ENCODE measurements at regions of chr6 and their contacts with region 1.

Region 1: DNA sequence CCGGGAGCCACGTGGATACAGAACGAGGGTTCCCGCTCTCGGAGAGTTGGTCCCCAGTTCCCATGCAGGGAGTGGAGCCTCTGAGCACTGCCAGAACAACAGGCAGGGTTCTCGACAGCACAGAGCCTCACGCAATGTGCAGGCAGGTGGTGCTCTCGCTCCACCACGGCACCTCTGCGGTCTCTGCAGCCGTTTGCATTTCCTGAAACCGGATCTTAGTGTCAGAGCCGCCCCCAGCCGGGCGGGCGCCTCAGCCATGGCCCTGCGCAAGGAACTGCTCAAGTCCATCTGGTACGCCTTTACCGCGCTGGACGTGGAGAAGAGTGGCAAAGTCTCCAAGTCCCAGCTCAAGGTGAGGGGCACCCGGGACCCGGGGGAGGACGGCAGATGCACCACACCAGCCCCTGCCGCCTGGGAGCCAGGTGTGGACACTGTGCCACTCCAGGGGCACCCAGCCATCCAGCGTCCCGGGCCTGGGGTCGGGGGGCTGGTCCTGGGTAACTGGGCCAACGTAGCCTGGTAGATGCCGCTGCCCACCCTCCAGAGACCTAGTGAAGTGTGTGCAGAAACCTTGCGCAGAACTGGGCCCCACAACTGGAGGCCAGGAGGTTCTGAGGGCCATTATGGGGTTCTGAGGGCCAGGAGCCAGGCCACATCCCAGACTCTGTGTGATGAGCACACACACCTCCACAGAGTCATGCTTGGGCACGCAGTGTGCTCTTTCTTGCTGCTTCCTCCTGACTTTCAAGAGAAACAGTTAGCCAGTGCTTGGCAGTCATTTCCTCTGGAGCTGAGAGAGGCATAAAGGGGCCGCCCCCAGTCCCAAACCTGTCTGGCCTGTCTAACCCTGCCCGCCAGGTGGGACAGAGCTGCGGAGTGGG is at the start of gene DEF6:
- DNase-seq: peak; percentile 82 to 94 (median 88)
- ATAC-seq: peak; percentile 71
- H3K4me3 ChIP-seq: peak within 1 kb of the TSS; percentile 91 to 99
- H3K4me3 Mint-ChIP-seq: peak within 1 kb of the TSS; percentile 86
- H3K27ac ChIP-seq: peak within 1 kb of the TSS; percentile 81 to 89
- H3K27ac Mint-ChIP-seq: peak within 1 kb of the TSS; percentile 98
- H3K4me1 ChIP-seq: peaks cover 48% of the 10 kb centered on the region
- H3K4me1 Mint-ChIP-seq: peaks cover 51% of the 10 kb centered on the region
- H3K27me3 ChIP-seq: no peaks in the 10 kb centered on the region
- H3K27me3 Mint-ChIP-seq: no peaks in the 10 kb centered on the region
- CTCF ChIP-seq: peak; percentile 90
- total RNA-seq, gene DEF6: 172 to 182 TPM

Region 2: DNA sequence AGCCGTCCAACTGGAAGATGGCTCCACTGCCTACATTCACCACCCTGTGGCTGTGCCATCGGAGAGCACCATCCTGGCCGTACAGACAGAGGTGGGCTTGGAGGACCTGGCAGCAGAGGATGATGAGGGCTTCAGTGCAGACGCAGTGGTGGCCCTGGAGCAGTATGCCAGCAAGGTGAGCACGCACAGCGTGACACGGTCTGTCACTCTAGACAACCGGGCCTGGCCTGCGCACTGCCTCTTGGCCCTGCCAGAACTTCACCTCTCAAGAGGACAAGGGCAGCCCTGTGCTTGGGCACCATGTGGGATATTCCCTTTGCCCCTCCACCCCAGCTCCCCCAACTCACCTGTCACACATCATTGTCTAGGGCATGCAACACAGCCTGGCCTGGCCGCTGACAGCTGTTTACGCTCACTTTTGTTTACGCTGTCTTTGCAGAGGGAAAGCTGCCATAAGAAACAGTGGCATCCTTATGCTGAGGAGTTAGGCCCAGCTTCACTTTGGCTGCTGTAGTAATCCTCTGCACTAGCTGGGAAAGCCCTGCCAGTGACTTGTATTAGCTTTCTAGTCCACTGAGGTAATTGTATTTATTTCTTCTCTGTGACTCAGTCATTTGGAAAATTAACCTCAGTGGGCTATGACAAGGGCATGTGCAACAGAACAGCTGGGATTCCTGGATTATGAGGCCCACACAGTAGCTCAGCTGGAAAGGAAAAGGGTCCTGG is 10.0 kb before region 1 on chr6:
- CTCF ChIA-PET with region 1: interaction called, 26 read pairs
- POLR2A ChIA-PET with region 1: interaction called, 3 read pairs
- intact Hi-C with region 1: no loop called
- DNase-seq: no peak
- ATAC-seq: no peak
- H3K4me3 ChIP-seq: no peak overlapping the region
- H3K4me3 Mint-ChIP-seq: no peak overlapping the region
- H3K27ac ChIP-seq: no peak overlapping the region
- H3K27ac Mint-ChIP-seq: no peak overlapping the region
- H3K4me1 ChIP-seq: no peaks in the 10 kb centered on the region
- H3K4me1 Mint-ChIP-seq: no peaks in the 10 kb centered on the region
- H3K27me3 ChIP-seq: no peaks in the 10 kb centered on the region
- H3K27me3 Mint-ChIP-seq: no peaks in the 10 kb centered on the region
- CTCF ChIP-seq: no peak

Region 3: DNA sequence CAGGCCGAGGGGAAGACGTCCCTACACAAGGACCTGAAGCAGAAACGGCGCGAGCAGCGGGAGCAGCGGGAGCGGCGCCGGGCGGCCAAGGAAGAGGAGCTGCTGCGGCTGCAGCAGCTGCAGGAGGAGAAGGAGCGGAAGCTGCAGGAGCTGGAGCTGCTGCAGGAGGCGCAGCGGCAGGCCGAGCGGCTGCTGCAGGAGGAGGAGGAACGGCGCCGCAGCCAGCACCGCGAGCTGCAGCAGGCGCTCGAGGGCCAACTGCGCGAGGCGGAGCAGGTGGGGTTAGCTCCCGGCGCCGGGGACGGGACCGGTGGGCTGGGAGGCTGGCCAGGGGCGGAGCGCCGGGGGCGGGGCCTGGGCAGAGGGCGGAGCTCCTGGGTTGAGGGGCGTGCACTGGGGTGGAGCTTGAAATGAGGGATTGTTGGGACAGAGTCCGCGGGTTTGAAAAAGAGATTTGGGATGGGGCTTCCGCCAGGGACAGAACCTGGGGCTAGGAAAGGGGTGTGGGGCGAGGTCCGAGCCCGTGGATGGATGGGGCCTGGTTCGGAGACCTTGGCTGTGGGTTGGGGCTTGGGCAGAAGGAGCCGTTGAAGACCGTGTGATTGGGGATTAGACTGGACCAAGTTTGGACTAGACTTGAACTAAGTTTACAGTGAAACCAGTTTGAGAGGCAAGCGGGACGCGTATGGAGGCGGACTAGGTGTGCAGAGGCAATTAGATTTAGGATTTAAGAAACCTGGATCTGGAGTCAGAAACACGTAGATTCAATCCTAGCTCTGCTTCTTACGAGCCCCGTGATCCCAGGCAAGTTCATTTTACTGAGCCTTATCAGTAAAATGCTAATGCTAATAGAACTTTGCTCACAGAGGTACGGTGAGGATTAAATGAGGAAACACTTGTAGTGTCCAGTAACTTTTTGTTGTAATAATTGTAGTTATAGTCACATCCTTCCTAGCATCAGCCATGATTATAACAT is 20.6 kb after region 1 on chr6:
- CTCF ChIA-PET with region 1: interaction called, 545 read pairs
- POLR2A ChIA-PET with region 1: interaction called, 9 read pairs
- intact Hi-C with region 1: loop called in 1 of 2 experiments (anchors 1 kb)
- DNase-seq: peak in 1 of 9 experiments; percentile 45
- ATAC-seq: no peak
- H3K4me3 ChIP-seq: no peak overlapping the region
- H3K4me3 Mint-ChIP-seq: no peak overlapping the region
- H3K27ac ChIP-seq: no peak overlapping the region
- H3K27ac Mint-ChIP-seq: peak overlapping the region; percentile 58
- H3K4me1 ChIP-seq: peaks cover 29% of the 10 kb centered on the region
- H3K4me1 Mint-ChIP-seq: peaks cover 50% of the 10 kb centered on the region
- H3K27me3 ChIP-seq: no peaks in the 10 kb centered on the region
- H3K27me3 Mint-ChIP-seq: no peaks in the 10 kb centered on the region
- CTCF ChIP-seq: no peak

Region 4: GRCh38 chr6:35342258-35343091 is 44.6 kb after region 1 on chr6 and contains the start of gene PPARD:
- CTCF ChIA-PET with region 1: interaction called, 88 read pairs
- POLR2A ChIA-PET with region 1: interaction called, 5 read pairs
- intact Hi-C with region 1: loop called (anchors 1 kb)
- DNase-seq: peak; percentile 93 to 99 (median 97)
- ATAC-seq: peak; percentile 99
- H3K4me3 ChIP-seq: peak within 1 kb of the TSS; percentile 52 to 57
- H3K4me3 Mint-ChIP-seq: peak within 1 kb of the TSS; percentile 87
- H3K27ac ChIP-seq: peak within 1 kb of the TSS; percentile 75 to 81
- H3K27ac Mint-ChIP-seq: peak within 1 kb of the TSS; percentile 94
- H3K4me1 ChIP-seq: peaks cover 43% of the 10 kb centered on the region
- H3K4me1 Mint-ChIP-seq: peaks cover 50% of the 10 kb centered on the region
- H3K27me3 ChIP-seq: no peaks in the 10 kb centered on the region
- H3K27me3 Mint-ChIP-seq: no peaks in the 10 kb centered on the region
- CTCF ChIP-seq: peak; percentile 90
- total RNA-seq, gene PPARD: 20.0 to 21.5 TPM

Region 5: GRCh38 chr6:35468181-35468979 is 170.5 kb after region 1 on chr6 and contains the start of gene RPL10A:
- CTCF ChIA-PET with region 1: interaction called, 48 read pairs
- POLR2A ChIA-PET with region 1: interaction called, 15 read pairs
- intact Hi-C with region 1: loop called (anchors 1 kb)
- DNase-seq: peak; percentile 90 to 99 (median 96)
- ATAC-seq: peak; percentile 88
- H3K4me3 ChIP-seq: peak within 1 kb of the TSS; percentile 74 to 100
- H3K4me3 Mint-ChIP-seq: peak within 1 kb of the TSS; percentile 96
- H3K27ac ChIP-seq: peak within 1 kb of the TSS; percentile 76 to 90
- H3K27ac Mint-ChIP-seq: peak within 1 kb of the TSS; percentile 99
- H3K4me1 ChIP-seq: peaks cover 26% of the 10 kb centered on the region
- H3K4me1 Mint-ChIP-seq: peaks cover 39% of the 10 kb centered on the region
- H3K27me3 ChIP-seq: no peaks in the 10 kb centered on the region
- H3K27me3 Mint-ChIP-seq: no peaks in the 10 kb centered on the region
- CTCF ChIP-seq: peak; percentile 90
- total RNA-seq, gene RPL10A: 2,275 to 2,367 TPM

Region 6: GRCh38 chr6:35624341-35625070 is 326.7 kb after region 1 on chr6:
- CTCF ChIA-PET with region 1: interaction called, 11 read pairs
- POLR2A ChIA-PET with region 1: no interaction called
- intact Hi-C with region 1: no loop called
- DNase-seq: peak in 3 of 9 experiments; percentile 58 to 79 (median 64)
- ATAC-seq: peak; percentile 86
- H3K4me3 ChIP-seq: no peak overlapping the region
- H3K4me3 Mint-ChIP-seq: peak overlapping the region; percentile 30
- H3K27ac ChIP-seq: peak overlapping the region; percentile 14 to 23
- H3K27ac Mint-ChIP-seq: peak overlapping the region; percentile 91
- H3K4me1 ChIP-seq: peaks cover 47% of the 10 kb centered on the region
- H3K4me1 Mint-ChIP-seq: peaks cover 48% of the 10 kb centered on the region
- H3K27me3 ChIP-seq: no peaks in the 10 kb centered on the region
- H3K27me3 Mint-ChIP-seq: no peaks in the 10 kb centered on the region
- CTCF ChIP-seq: peak; percentile 70

Region 7: GRCh38 chr6:35757456-35758123 is 459.7 kb after region 1 on chr6:
- CTCF ChIA-PET with region 1: no interaction called
- POLR2A ChIA-PET with region 1: no interaction called
- intact Hi-C with region 1: no loop called
- DNase-seq: peak in 1 of 9 experiments; percentile 18
- ATAC-seq: no peak
- H3K4me3 ChIP-seq: no peak overlapping the region
- H3K4me3 Mint-ChIP-seq: no peak overlapping the region
- H3K27ac ChIP-seq: no peak overlapping the region
- H3K27ac Mint-ChIP-seq: no peak overlapping the region
- H3K4me1 ChIP-seq: no peaks in the 10 kb centered on the region
- H3K4me1 Mint-ChIP-seq: peaks cover 3% of the 10 kb centered on the region
- H3K27me3 ChIP-seq: peaks cover 0 to 7% of the 10 kb centered on the region in 2 experiments
- H3K27me3 Mint-ChIP-seq: peaks cover 40% of the 10 kb centered on the region
- CTCF ChIP-seq: no peak

Measured in CD8-positive, alpha-beta T cell (primary cell).